Activated CD4-positive, alpha-beta memory T cell treated with anti-CD3 and anti-CD28 coated beads, Interleukin-2, amount 10 ng/mL, durations not matched to agents 7 days and 5 days (primary cell): ENCODE measurements at regions of chr7 and their contacts with region 1.

Region 1: GRCh38 chr7:105759670-105760550 is 116.5 kb downstream of the ATXN7L1 start:
- DNase-seq: no peak
- H3K4me3 Mint-ChIP-seq: no peak overlapping the region
- H3K27ac Mint-ChIP-seq: no peak overlapping the region
- H3K4me1 Mint-ChIP-seq: peaks cover 30% of the 10 kb centered on the region
- H3K27me3 Mint-ChIP-seq: peaks cover 10% of the 10 kb centered on the region

Region 2: GRCh38 chr7:105652359-105652993 is 107.4 kb before region 1 on chr7:
- CTCF ChIA-PET with region 1: interaction called, 14 read pairs
- POLR2A ChIA-PET with region 1: no interaction called
- DNase-seq: peak; percentile 67
- H3K4me3 Mint-ChIP-seq: no peak overlapping the region
- H3K27ac Mint-ChIP-seq: no peak overlapping the region
- H3K4me1 Mint-ChIP-seq: peaks cover 15% of the 10 kb centered on the region
- H3K27me3 Mint-ChIP-seq: no peaks in the 10 kb centered on the region

Region 3: GRCh38 chr7:105743351-105744090 is 16.4 kb before region 1 on chr7:
- CTCF ChIA-PET with region 1: interaction called, 20 read pairs
- POLR2A ChIA-PET with region 1: no interaction called
- DNase-seq: peak; percentile 33
- H3K4me3 Mint-ChIP-seq: no peak overlapping the region
- H3K27ac Mint-ChIP-seq: no peak overlapping the region
- H3K4me1 Mint-ChIP-seq: peaks cover 34% of the 10 kb centered on the region
- H3K27me3 Mint-ChIP-seq: no peaks in the 10 kb centered on the region

Region 4: DNA sequence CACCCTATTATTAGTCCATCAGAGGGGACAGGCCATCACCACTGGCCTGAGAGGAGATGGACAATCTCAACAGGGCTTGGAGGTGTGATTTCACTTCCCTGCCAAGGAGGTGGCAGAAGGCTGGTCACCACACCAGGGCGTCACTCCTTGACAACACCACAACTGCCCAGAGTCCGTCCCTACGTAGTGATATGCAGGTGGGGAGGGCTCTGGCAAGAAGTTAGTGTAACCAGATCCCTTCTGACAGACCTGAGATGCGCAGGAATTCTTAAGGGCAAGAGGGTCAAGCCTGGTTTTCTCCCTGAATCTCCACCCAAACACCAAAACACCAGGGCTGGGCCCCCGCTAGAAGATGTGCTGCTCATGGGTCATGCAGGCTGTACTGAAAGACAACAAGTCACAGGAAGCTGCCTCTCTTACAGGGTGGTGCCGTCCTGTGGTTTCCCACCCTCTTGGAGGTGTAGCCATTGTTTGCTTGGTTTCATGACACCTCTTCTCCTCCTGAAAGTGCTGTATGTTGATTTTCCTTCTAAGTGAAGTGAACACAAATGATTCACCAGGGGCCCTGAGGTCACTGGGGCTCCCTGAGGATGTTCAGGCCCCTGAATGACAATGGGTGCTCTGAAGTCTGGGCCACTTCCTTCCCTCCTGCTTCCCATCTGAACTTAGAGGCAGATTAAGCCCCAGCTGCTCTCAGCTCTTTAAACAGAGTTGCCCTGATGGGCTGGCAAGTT is 89.4 kb after region 1 on chr7:
- CTCF ChIA-PET with region 1: interaction called, 18 read pairs
- POLR2A ChIA-PET with region 1: interaction called, 3 read pairs
- DNase-seq: peak; percentile 86
- H3K4me3 Mint-ChIP-seq: peak overlapping the region; percentile 56
- H3K27ac Mint-ChIP-seq: peak overlapping the region; percentile 85
- H3K4me1 Mint-ChIP-seq: peaks cover 65% of the 10 kb centered on the region
- H3K27me3 Mint-ChIP-seq: no peaks in the 10 kb centered on the region

Region 5: GRCh38 chr7:106009403-106010226 is 249.7 kb after region 1 on chr7:
- CTCF ChIA-PET with region 1: interaction called, 43 read pairs
- POLR2A ChIA-PET with region 1: no interaction called
- DNase-seq: peak; percentile 83
- H3K4me3 Mint-ChIP-seq: no peak overlapping the region
- H3K27ac Mint-ChIP-seq: no peak overlapping the region
- H3K4me1 Mint-ChIP-seq: peaks cover 12% of the 10 kb centered on the region
- H3K27me3 Mint-ChIP-seq: peaks cover 33% of the 10 kb centered on the region

Region 6: DNA sequence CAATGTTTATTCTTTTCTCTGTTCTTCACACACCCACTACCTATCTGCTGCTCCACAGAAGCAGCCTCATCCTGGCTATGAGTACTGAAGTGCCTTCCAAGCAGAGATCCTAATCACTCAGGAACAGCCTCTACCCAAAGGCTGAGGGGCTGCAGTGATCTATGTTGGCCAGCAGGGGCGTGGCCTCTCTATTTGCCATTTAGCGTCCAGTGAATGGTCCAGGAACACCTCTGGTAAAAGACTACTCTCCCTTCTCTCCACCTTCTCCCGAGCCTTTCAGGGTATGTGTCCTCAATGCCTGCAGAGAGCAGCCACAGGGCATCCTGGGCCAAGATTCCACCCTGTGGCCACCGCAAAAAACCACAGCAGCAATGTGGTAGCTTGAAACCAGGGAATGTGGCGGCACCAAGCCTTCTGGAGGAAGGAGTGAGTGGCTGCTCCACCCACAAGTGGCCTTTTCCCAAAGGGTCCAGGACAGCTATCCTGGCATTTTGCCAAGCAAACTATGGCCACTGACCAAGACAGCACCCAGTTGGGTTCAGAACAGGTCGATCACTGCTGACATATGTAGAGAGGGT is 281.3 kb after region 1 on chr7:
- CTCF ChIA-PET with region 1: interaction called, 48 read pairs
- POLR2A ChIA-PET with region 1: no interaction called
- DNase-seq: peak; percentile 35
- H3K4me3 Mint-ChIP-seq: no peak overlapping the region
- H3K27ac Mint-ChIP-seq: no peak overlapping the region
- H3K4me1 Mint-ChIP-seq: peaks cover 7% of the 10 kb centered on the region
- H3K27me3 Mint-ChIP-seq: peaks cover 32% of the 10 kb centered on the region